ENCODE measurements at regions of chr2 and their contacts with region 1.

Region 1: DNA sequence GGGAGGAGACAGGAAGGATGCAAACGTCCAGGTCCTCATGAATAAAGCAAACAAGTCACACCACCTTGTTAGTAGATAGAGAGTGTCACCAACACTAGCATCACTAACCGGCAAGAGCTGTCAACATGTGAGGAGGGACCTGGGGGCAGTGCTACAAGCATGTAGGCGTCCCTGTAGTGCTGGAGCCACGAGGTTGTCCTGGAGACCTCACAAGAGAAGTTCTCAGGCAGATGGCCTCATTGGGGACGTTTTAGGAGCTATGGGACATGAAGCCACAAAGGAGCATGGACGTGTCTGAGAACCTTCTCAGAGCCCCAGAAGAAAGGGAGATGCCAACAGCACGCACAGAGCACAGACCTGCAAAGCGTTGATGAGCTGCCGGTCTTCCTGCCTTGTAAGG is 70.0 kb downstream of the COL6A3 start:
- DNase-seq: no peak
- H3K4me3 ChIP-seq: no peak overlapping the region
- H3K27ac ChIP-seq: peak overlapping the region in 1 of 2 donors; percentile 69
- H3K4me1 ChIP-seq: no peaks in the 10 kb centered on the region
- H3K27me3 ChIP-seq: no peaks in the 10 kb centered on the region
- CTCF ChIP-seq: no peak
- POLR2A ChIP-seq: no peak

Region 2: DNA sequence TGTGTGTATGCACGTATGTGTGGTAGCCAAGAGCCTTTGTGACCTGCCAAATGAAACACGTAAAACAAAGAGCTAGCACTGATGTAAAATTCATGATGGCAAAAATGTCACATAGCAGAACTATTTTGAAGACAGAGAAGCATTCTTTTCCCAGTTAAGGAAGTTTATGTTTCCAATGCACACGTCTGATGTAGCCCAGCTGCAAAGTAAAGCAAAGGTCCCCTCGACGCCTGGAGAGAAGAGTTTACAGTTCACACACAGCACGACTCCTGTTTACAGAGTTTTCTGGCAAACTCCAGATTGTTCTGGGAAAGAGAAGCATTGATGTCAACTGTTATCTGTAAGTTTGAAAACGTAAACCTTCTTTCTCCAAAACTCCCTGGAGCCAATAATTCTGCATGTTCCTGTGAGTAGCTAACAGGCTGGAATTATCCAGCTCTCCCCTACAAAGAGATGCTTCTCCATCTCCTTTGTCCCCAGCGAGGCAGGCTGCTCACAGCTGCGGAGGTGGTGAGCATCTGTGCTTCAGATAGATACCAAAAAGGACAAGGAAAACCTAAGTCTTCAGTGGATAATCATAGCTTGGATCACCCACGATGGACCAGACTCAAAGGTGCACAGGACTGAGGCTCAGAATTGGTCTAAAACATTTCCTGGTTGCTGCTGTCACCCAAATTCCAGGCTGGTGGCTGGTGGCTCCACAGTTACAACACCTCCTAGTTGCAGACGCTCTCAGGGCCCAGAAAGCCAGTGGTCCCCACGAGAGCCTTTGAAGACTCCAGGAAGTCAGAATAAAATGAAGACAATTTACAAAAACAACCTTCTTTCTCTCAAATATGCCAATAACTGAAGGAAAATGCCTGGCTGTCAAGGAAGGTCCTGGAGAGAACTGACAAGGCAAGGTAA is 17.5 kb before region 1 on chr2:
- intact Hi-C with region 1: loop called (anchors 1 kb)
- DNase-seq: no peak
- H3K4me3 ChIP-seq: no peak overlapping the region
- H3K27ac ChIP-seq: peak overlapping the region; percentile 60 to 73
- H3K4me1 ChIP-seq: no peaks in the 10 kb centered on the region
- H3K27me3 ChIP-seq: no peaks in the 10 kb centered on the region
- CTCF ChIP-seq: no peak
- POLR2A ChIP-seq: no peak

Region 3: DNA sequence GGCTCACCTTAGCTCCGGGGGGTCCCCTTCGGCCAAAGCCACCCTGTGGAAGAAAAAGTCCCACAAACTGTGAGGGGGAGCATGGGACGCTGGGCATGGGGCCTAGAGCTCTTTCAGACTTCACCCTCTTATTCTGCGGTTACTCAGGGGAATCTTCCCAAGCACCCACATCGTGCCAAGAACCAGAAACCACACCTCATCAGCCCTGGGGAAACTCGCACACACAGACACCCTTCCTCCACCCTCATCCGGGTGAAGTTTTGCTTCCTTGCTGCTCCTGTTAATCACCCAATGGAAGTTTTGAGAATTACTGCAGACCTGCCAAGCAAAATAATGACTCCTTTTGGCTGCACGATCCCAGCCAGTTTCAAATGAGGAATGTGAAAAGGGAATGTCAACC is 10.9 kb after region 1 on chr2:
- intact Hi-C with region 1: no loop called
- DNase-seq: peak in 1 of 2 donors; percentile 76
- H3K4me3 ChIP-seq: no peak overlapping the region
- H3K27ac ChIP-seq: peak overlapping the region; percentile 72 to 76
- H3K4me1 ChIP-seq: peaks cover 3 to 5% of the 10 kb centered on the region in 2 donors
- H3K27me3 ChIP-seq: no peaks in the 10 kb centered on the region
- CTCF ChIP-seq: peak in 2 of 3 donors; percentile 20 to 29
- POLR2A ChIP-seq: no peak

Region 4: GRCh38 chr2:238277695-238278094 is 933.7 kb after region 1 on chr2:
- intact Hi-C with region 1: no loop called
- DNase-seq: no peak
- H3K4me3 ChIP-seq: no peak overlapping the region
- H3K27ac ChIP-seq: no peak overlapping the region
- H3K4me1 ChIP-seq: peaks cover 4 to 5% of the 10 kb centered on the region in 2 donors
- H3K27me3 ChIP-seq: no peaks in the 10 kb centered on the region
- CTCF ChIP-seq: no peak
- POLR2A ChIP-seq: no peak